HCT116 (cell line): ENCODE measurements at regions of chr16 and their contacts with region 1.

Region 1: DNA sequence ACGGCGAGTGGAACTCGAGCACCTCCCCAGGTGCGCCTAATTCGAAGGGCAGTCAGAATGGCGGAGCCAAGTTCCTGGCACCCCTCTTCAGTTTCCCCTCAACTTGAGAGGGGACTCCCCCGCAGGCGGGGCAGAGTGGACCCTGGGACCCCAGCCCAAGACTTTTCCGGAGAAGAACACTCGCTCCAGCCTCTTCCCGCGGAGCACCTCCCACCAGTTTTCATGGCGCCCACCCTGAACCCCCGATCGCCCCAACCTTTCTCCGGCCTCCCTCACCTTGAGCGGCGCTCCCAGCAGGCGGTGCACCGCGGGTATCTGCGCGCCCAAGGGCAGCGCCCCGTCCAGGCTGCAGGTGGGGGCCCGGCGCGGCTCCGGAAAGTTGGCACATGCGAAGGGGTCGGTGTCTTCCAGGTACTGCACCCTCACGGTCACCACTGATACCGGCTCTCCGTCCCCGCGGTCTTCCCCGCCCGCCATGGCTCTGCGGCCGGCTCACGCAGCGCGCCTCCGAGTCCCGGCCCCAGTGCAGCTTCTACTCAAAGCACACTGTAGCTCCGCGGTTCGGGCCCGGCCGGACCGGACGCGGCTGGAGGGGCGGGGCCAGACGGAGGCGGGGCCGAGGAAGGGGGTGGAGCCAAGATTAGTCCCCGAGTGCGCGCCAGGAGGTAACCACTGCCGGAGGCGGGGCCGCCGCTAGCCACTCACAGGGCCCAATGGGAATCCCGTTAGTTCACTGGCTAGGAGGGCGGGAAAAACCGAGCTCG is at the start of gene FHOD1:
- DNase-seq: peak; percentile 83
- ATAC-seq: peak; percentile 64
- H3K4me3 ChIP-seq: peak within 1 kb of the TSS; percentile 71 to 92
- H3K27ac ChIP-seq: peak within 1 kb of the TSS; percentile 92
- H3K4me1 ChIP-seq: peaks cover 39 to 67% of the 10 kb centered on the region in 2 experiments
- H3K27me3 ChIP-seq: no peaks in the 10 kb centered on the region
- CTCF ChIP-seq: no peak
- POLR2A ChIP-seq: peak; percentile 41
- RAD21 ChIP-seq: no peak
- total RNA-seq, gene FHOD1: 69.2 TPM

Region 2: GRCh38 chr16:67226804-67227557 is 20.1 kb before region 1 on chr16 and contains the start of gene TMEM208:
- CTCF ChIA-PET with region 1: interaction called, 10 read pairs
- POLR2A ChIA-PET with region 1: interaction called, 13 read pairs
- RAD21 ChIA-PET with region 1: interaction called in 1 of 2 experiments, 6 read pairs
- intact Hi-C with region 1: no loop called
- DNase-seq: peak; percentile 95
- ATAC-seq: peak; percentile 94
- H3K4me3 ChIP-seq: peak within 1 kb of the TSS; percentile 80 to 88
- H3K27ac ChIP-seq: peak within 1 kb of the TSS; percentile 48
- H3K4me1 ChIP-seq: peaks cover 6 to 18% of the 10 kb centered on the region in 2 experiments; a peak in 3 of 4 replicates
- H3K27me3 ChIP-seq: no peaks in the 10 kb centered on the region
- CTCF ChIP-seq: peak in 2 of 3 experiments; percentile 5 to 46; a peak in 2 of 6 replicates
- POLR2A ChIP-seq: peak; percentile 66
- RAD21 ChIP-seq: no peak
- total RNA-seq, gene TMEM208: 36.1 TPM

Region 3: GRCh38 chr16:67260426-67261075 is 13.4 kb after region 1 on chr16:
- CTCF ChIA-PET with region 1: interaction called, 17 read pairs
- POLR2A ChIA-PET with region 1: interaction called, 5 read pairs
- RAD21 ChIA-PET with region 1: no interaction called
- intact Hi-C with region 1: no loop called
- DNase-seq: no peak
- ATAC-seq: peak; percentile 79
- H3K4me3 ChIP-seq: no peak overlapping the region
- H3K27ac ChIP-seq: no peak overlapping the region
- H3K4me1 ChIP-seq: no peaks in the 10 kb centered on the region
- H3K27me3 ChIP-seq: no peaks in the 10 kb centered on the region
- CTCF ChIP-seq: peak; percentile 62 to 84 (median 70)
- POLR2A ChIP-seq: no peak
- RAD21 ChIP-seq: peak; percentile 92

Region 4: GRCh38 chr16:67279296-67280089 is 32.4 kb after region 1 on chr16 and contains the start of gene PLEKHG4:
- CTCF ChIA-PET with region 1: interaction called, 3 read pairs
- POLR2A ChIA-PET with region 1: interaction called, 7 read pairs
- RAD21 ChIA-PET with region 1: interaction called, 3 to 4 read pairs
- intact Hi-C with region 1: loop called (anchors 2 kb)
- DNase-seq: peak; percentile 52
- ATAC-seq: peak; percentile 84
- H3K4me3 ChIP-seq: peak within 1 kb of the TSS; percentile 86 to 87
- H3K27ac ChIP-seq: peak within 1 kb of the TSS; percentile 91
- H3K4me1 ChIP-seq: peaks cover 28 to 39% of the 10 kb centered on the region in 2 experiments
- H3K27me3 ChIP-seq: no peaks in the 10 kb centered on the region
- CTCF ChIP-seq: peak in 2 of 3 experiments; percentile 62 to 79; a peak in 4 of 6 replicates
- POLR2A ChIP-seq: peak; percentile 33
- RAD21 ChIP-seq: no peak
- total RNA-seq, gene PLEKHG4: 38.5 TPM